Sciatic nerve (tissue), 2 donors: ENCODE measurements at regions of chr6 and their contacts with region 1.

Region 1: DNA sequence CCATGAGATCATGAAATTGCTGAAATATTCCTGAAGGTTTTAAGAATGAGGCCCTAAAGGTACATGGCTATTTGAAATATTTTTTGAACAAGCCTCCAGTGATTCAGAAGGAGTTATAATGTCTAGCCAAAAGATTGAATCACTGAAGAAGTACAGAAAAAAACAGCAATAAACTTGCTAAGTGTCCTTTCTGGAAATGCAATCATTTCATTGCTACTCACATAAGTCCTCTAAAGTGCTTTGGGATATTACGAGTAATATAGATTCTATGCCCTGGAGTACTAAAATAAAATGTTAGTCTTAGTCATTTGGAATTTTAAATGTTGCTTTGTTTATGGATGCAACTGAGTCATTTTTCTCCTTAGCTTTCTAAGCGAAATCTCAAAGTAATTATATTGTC is 32.7 kb downstream of the CENPW start:
- DNase-seq: no peak
- ATAC-seq: no peak

Region 2: DNA sequence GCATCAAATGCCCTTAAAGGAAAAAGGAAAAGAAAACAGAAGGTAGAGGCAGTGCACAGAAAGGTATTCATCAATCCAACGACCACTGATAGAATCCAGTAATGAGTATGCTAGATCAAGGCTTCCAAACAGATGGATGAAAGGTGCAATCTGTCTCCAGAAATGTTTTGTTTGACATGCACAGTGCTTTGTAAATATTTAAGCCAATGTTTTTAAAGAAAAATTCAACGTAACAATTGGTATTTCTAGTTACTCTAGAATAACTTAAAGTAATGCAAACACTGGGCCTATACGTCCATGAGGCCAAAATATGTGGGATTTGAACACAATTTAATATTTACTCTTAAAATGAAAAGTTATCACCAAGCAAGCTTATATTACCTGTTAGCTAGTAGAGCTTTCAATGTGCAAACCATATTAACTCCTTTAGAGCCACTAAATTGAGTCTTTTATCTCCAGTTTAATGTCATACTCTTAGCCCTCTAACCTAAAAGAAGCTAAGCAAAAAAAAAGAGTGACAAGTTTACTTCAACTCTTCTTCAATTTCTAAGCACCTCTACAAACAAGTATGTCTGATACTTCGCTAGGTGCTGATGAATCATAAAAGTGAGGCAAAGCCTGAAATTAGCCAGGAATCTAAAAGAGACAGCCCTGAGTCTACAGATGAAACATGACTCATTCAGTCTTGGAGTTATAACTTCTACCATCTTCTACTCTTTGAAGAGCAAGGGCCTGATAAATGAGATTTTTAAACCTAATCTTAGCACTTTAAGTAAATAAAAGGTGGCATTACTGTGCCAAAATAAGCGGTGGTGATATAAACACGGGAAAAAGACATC is 1978.0 kb after region 1 on chr6:
- intact Hi-C with region 1: loop called (anchors 5 kb)
- DNase-seq: no peak
- ATAC-seq: no peak